Sigmoid colon (tissue), 7 donors: ENCODE measurements at regions of chr1 and their contacts with region 1.

Region 1: GRCh38 chr1:208245185-208245705 is 1.1 kb upstream of the PLXNA2 start:
- DNase-seq: peak; percentile 96
- H3K4me3 ChIP-seq: peak overlapping the region in 3 of 4 donors; percentile 83 to 91 (median 84)
- H3K27ac ChIP-seq: peak overlapping the region; percentile 83 to 91 (median 88)
- H3K4me1 ChIP-seq: peaks cover 0 to 37% (median 33%) of the 10 kb centered on the region in 4 donors
- H3K27me3 ChIP-seq: no peaks in the 10 kb centered on the region
- CTCF ChIP-seq: peak; percentile 81 to 88 (median 84)
- EP300 ChIP-seq: no peak
- POLR2A ChIP-seq: no peak

Region 2: DNA sequence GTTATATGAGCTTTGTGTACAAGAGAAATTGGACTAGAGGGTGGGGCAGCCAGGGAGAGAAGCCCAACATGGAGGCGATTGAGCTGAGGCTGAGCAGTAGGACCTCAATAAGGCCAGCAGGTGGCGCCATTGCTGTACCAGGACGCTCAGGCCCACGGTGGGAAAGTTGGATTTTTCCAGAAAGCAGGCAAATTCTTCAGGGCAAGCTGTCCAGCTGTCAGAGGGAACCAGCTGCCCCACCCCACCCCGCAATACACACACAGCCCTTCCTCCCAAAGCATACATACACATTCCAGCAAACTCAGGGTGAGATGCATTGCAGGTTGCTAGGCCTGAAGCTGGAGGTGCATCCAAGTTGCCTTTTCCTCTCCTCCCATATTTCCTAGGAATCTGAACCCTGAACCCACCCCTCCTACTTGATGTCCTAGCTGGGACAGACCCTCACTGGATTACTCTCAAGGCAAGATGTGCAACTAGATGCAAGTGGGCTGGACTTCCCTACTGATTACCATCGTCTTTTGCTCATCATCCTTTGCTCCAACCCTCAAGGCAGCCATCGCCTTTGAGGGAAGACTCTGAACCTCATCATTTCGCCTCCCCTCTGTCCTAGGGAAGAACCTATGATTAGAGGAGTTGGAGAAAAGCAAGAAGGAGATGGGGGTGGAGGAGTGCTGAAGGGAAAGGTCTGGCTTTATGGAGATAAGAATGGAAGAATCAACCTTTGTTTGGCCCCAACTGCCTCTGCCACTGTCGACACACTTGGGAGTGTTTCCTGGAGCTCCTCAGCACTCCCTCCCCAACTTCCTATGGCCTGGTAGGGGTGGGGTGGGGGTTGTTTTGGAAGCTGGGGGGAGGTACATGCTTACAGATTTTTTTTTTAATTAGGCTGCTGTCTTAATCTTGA is 359.9 kb before region 1 on chr1:
- intact Hi-C with region 1: loop called (anchors 5 kb)
- DNase-seq: peak; percentile 93
- H3K4me3 ChIP-seq: no peak overlapping the region
- H3K27ac ChIP-seq: peak overlapping the region; percentile 28 to 60 (median 41)
- H3K4me1 ChIP-seq: peaks cover 0 to 55% (median 23%) of the 10 kb centered on the region in 4 donors
- H3K27me3 ChIP-seq: no peaks in the 10 kb centered on the region
- CTCF ChIP-seq: peak; percentile 91 to 97 (median 96)
- EP300 ChIP-seq: no peak
- POLR2A ChIP-seq: no peak

Region 3: GRCh38 chr1:208476340-208477041 is 231.2 kb after region 1 on chr1:
- intact Hi-C with region 1: no loop called
- DNase-seq: peak; percentile 67
- H3K4me3 ChIP-seq: no peak overlapping the region
- H3K27ac ChIP-seq: peak overlapping the region in 3 of 4 donors; percentile 25 to 51 (median 40)
- H3K4me1 ChIP-seq: peaks cover 0 to 12% (median 4%) of the 10 kb centered on the region in 4 donors
- H3K27me3 ChIP-seq: no peaks in the 10 kb centered on the region
- CTCF ChIP-seq: no peak
- EP300 ChIP-seq: no peak
- POLR2A ChIP-seq: no peak